WTC11 (cell line): ENCODE measurements at regions of chr3 and their contacts with region 1.

Region 1: DNA sequence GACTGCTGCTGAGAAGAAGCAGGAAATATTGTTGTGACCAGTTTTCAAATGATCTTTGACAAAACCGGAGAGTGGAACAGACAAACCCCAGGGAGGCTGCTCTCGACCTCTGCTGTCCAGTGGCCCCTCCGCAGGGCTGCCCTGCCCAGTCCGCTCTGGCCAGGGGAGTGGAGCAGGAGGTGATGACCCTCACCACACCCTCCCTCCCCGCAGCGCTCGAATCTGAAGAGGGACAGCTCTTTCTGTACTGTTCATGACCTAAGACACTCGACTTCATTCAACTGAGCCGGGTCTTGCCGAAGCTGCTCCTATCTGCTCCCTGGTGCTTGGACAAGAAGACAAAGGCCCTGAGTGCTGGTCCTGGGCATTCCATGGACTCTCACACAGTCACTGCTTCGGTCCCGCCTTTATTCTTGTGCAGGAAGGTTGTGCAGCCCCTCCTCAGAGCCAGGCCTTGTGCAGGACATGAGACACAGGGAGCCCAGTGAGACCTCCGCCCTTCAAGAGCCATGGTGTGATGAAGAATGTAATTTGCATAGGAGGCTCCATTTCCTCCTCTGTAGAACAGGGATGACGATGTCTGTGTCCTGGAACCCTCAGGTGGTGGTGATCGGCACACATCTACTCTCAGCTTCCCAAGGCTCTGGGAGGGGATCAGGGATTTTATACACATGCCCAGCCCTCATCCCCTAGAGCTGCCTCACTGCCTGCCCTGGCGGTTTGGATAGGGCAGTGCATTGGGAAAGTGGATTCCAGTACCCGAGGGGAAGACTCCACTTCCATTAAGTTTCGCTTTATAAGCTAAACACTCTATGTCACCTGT is 97.1 kb upstream of the PRR20G start:
- DNase-seq: no peak
- ATAC-seq: peak; percentile 53
- H3K4me3 Mint-ChIP-seq: no peak overlapping the region
- H3K27ac Mint-ChIP-seq: no peak overlapping the region
- H3K4me1 Mint-ChIP-seq: peaks cover 4% of the 10 kb centered on the region
- H3K27me3 Mint-ChIP-seq: peaks cover 3% of the 10 kb centered on the region
- CTCF ChIP-seq: no peak

Region 2: DNA sequence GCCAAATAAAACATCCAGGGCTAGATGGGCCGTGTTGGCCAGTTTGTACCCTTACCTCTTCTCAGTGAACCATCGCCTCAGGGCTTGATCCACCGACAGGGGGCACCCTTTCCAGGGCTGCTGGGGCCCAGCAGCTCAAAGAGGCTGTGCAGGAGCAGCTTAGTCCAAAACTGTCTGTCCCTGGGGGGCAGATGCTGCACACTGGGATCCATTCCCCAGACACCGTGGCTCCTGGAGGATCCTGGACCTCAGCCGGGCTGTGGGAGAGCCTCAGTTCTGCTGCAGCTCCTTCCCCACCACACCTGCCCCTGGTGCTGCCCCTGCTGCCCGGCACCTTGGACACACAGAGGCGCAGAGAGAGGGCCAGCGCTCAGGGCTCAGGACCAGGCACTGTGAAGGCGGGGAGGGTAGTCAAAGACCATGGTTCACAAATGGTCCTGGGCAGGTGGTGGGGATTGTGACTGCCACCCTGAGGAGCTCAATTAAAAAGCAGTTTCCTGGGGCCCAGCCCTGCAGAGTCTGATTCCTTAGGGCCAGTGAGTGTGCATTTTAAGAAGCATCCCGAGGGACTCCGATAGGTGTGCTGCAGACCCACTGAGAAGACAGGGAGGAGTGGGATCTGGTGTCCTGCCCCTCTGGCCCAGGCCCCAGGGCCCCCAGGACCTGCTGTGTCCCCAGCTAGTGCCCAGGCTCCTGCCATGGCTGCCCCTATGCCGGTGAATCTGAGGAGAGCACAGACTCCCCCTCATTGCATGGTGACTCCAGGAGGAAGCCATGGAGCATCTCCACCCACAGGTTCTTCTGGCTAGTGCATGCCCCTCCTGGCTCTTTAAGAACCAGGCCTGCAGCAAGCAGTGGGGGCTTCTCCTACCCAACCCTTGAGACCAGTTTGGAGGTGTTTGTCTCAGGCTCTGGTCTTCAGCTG is 10.6 kb before region 1 on chr3:
- CTCF ChIA-PET with region 1: interaction called, 14 read pairs
- POLR2A ChIA-PET with region 1: no interaction called
- DNase-seq: peak; percentile 79
- ATAC-seq: peak; percentile 77
- H3K4me3 Mint-ChIP-seq: no peak overlapping the region
- H3K27ac Mint-ChIP-seq: no peak overlapping the region
- H3K4me1 Mint-ChIP-seq: peaks cover 5% of the 10 kb centered on the region; the same call in 1 of the 2 replicates
- H3K27me3 Mint-ChIP-seq: no peaks in the 10 kb centered on the region
- CTCF ChIP-seq: peak; percentile 60